ENCODE measurements at regions of chr1 and their contacts with region 1.

Region 1: GRCh38 chr1:72341661-72342060 is 59.3 kb upstream of the NEGR1 start:
- DNase-seq: no peak
- ATAC-seq: no peak
- H3K4me3 Mint-ChIP-seq: no peak overlapping the region
- H3K27ac Mint-ChIP-seq: no peak overlapping the region
- H3K4me1 Mint-ChIP-seq: no peaks in the 10 kb centered on the region
- H3K27me3 Mint-ChIP-seq: no peaks in the 10 kb centered on the region

Region 2: DNA sequence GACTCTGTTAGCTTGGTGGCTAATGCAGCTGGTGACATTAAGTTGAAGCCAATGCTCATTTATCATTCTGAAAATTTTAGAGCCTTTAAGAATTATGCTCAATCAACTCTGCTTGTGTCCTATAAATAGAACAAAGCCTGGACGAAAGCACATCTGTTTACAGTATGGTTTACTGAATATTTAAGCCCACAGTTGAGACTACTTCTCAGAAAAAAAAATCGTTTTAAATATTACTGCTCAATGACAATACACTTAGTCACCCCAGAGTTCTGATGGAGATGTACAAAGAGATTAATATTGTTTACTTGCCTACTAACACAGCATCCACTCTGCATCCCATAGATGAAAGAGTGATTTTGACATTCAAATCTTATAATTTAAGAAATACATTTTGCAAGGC is 138.9 kb before region 1 on chr1:
- CTCF ChIA-PET with region 1: no interaction called
- POLR2A ChIA-PET with region 1: no interaction called
- intact Hi-C with region 1: no loop called
- DNase-seq: no peak
- ATAC-seq: no peak
- H3K4me3 Mint-ChIP-seq: no peak overlapping the region
- H3K27ac Mint-ChIP-seq: no peak overlapping the region
- H3K4me1 Mint-ChIP-seq: no peaks in the 10 kb centered on the region
- H3K27me3 Mint-ChIP-seq: no peaks in the 10 kb centered on the region

Region 3: GRCh38 chr1:72296481-72296880 is 45.2 kb before region 1 on chr1:
- CTCF ChIA-PET with region 1: no interaction called
- POLR2A ChIA-PET with region 1: no interaction called
- intact Hi-C with region 1: loop called in 1 of 2 experiments (anchors 1 kb)
- DNase-seq: no peak
- ATAC-seq: no peak
- H3K4me3 Mint-ChIP-seq: no peak overlapping the region
- H3K27ac Mint-ChIP-seq: no peak overlapping the region
- H3K4me1 Mint-ChIP-seq: no peaks in the 10 kb centered on the region
- H3K27me3 Mint-ChIP-seq: peaks cover 4% of the 10 kb centered on the region

Measured in activated CD4-positive, alpha-beta T cell treated with anti-CD3 and anti-CD28 coated beads for 36 hours (primary cell).